Activated T-helper 2 cell treated with anti-CD3 and anti-CD28 coated beads, Interferon-gamma antibody, Interleukin-2, Interleukin-4, amounts not matched to agents 10 μg/mL and 5 μg/mL and 100 μg/mL, durations not matched to agents 14 hours and 24 hours and 36 hours (primary cell): ENCODE measurements at regions of chr7 and their contacts with region 1.

Region 1: DNA sequence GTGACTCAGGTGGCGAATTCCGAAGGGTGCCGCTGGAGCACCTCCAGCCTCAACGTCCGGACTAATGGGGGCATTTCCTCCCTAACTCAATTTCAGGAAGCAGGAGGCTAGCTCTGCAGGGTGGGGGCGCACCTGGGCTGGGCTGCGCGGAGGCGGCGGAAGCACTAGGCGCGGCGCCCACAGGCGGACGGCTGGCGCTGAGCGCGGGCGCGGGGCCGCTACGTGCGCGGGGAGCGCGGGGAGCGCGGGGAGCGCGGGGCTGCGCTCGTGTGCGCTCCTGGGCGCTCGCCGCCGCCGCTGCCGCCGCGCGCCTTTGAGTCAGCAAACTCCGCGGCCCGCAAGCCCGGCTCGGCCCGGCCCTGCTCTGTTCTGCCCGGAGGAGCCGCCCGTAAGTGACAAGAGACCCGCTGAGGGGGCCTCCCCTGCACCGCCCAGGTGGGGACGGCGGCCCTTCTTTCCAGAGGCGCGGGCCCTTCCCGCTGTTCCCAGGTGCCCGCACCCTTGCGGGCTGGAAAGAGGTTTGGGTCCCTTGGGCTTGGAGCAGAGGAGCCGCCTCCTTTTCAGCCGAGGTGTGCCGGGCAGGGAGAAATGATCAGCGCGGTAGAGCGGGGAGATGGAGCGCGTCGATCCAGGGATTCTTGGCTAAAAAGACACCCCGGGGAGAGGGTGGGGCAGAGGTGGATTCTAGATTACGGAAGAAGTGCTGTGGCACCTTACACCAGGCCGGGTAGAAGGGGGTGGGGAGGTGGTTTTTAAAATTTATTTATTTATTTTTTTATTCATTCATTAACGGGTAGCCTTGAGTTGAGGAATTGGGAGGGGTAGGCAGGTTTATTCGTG is at the start of gene SNX10:
- DNase-seq: peak; percentile 67
- H3K4me3 Mint-ChIP-seq: peak within 1 kb of the TSS; percentile 99
- H3K27ac Mint-ChIP-seq: peak within 1 kb of the TSS; percentile 95
- H3K4me1 Mint-ChIP-seq: peaks cover 37% of the 10 kb centered on the region
- H3K27me3 Mint-ChIP-seq: peaks cover 4% of the 10 kb centered on the region
- total RNA-seq, gene SNX10: 54.9 and 59.3 TPM in 2 replicates

Region 2: DNA sequence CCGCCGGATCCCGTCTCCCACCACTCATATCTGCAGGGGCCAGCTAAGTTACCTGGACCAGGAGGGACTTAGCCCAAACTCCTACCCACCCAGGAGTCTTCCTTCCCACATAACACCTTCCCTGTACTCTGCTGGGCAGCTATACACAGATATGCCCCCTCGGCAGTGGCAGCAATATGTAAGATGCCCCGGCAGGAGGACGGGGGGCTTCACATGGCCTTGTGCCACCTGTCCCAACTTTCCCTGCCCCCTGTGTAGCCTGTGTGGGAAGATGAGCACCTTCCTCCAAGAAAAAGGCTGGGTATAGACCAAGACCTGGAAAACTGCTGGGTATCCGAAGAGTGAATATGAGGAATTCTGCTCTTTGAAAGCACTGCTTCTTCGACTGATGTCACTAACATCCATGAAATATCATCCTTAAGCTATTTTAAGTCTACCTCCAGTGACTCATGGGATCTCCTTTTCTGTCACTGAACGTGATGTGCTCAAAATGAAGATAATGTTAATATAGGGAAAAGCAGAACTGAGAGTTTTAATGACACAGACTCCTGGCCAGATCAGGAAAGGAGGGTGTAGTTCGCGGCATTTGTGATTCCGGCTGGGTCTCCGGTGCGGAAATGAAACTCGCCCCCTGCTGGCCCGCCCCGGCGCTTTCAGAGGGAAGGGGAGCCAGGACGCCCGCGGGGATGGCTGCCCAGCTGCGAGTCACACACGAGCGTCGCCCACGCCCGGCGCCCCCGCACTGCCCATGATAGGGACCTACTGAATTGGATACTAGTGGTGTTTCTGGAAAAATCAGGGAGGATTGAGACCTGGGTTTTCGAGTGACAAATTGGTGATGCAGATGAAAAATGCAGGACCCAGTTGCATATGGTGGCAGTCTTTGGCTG is 396.8 kb before region 1 on chr7:
- intact Hi-C with region 1: loop called (anchors 10 kb)
- DNase-seq: peak; percentile 53
- H3K4me3 Mint-ChIP-seq: peak overlapping the region; percentile 53
- H3K27ac Mint-ChIP-seq: no peak overlapping the region
- H3K4me1 Mint-ChIP-seq: peaks cover 31% of the 10 kb centered on the region
- H3K27me3 Mint-ChIP-seq: peaks cover 7% of the 10 kb centered on the region

Region 3: GRCh38 chr7:26090927-26091519 is 200.9 kb before region 1 on chr7:
- intact Hi-C with region 1: loop called (anchors 5 kb)
- DNase-seq: no peak
- H3K4me3 Mint-ChIP-seq: peak overlapping the region; percentile 3
- H3K27ac Mint-ChIP-seq: no peak overlapping the region
- H3K4me1 Mint-ChIP-seq: peaks cover 19% of the 10 kb centered on the region
- H3K27me3 Mint-ChIP-seq: peaks cover 2% of the 10 kb centered on the region

Region 4: GRCh38 chr7:26200444-26201246 is 91.3 kb before region 1 on chr7 and contains the start of gene HNRNPA2B1:
- intact Hi-C with region 1: loop called (anchors 1 kb)
- DNase-seq: peak; percentile 97
- H3K4me3 Mint-ChIP-seq: peak within 1 kb of the TSS; percentile 100
- H3K27ac Mint-ChIP-seq: peak within 1 kb of the TSS; percentile 100
- H3K4me1 Mint-ChIP-seq: peaks cover 45% of the 10 kb centered on the region
- H3K27me3 Mint-ChIP-seq: no peaks in the 10 kb centered on the region
- total RNA-seq, gene HNRNPA2B1: 835 and 845 TPM in 2 replicates

Region 5: DNA sequence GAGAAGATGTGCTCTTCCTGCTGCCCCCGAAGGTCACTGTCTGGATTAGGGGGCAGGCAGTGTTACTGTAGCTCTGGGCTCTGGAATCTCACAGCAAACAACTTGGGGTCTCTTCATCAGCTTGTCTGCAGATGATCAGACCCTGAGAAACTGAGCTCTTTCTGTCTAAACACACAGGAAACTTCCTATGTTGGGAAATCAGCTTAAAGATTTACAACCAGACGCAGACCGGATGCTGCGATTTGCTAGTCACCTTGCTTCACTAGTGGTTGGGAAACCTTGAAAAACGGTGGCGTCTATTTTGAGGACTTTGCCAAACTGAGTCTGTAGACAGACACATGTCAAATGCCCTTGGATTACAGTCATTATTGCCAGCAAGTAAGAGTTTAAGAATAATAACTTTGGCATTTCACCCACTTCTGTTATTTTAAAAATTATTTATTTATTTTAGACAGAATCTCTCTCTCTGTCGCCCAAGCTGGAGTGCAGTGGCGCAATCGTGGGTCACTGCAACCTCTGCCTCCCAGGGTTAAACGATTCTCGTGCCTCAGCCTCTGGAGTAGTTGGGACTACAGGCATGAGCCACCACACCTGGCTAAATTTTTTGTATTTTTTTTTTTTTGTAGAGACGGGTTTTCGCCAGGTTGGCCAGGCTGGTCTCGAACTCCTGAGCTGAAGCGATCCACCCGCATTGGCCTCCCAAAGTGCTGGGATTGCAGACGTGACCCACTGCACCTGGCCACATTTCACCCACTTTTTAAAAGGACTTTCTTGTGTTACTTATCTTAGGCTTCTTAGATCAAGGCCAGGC is 13.7 kb after region 1 on chr7:
- intact Hi-C with region 1: loop called (anchors 1 kb)
- DNase-seq: no peak
- H3K4me3 Mint-ChIP-seq: no peak overlapping the region
- H3K27ac Mint-ChIP-seq: peak overlapping the region; percentile 87
- H3K4me1 Mint-ChIP-seq: peaks cover 40% of the 10 kb centered on the region
- H3K27me3 Mint-ChIP-seq: no peaks in the 10 kb centered on the region

Region 6: GRCh38 chr7:26318921-26319320 is 27.0 kb after region 1 on chr7:
- intact Hi-C with region 1: no loop called
- DNase-seq: no peak
- H3K4me3 Mint-ChIP-seq: no peak overlapping the region
- H3K27ac Mint-ChIP-seq: no peak overlapping the region
- H3K4me1 Mint-ChIP-seq: peaks cover 15% of the 10 kb centered on the region
- H3K27me3 Mint-ChIP-seq: no peaks in the 10 kb centered on the region

Region 7: GRCh38 chr7:26365077-26365900 is 73.4 kb after region 1 on chr7:
- intact Hi-C with region 1: loop called (anchors 1 kb)
- DNase-seq: peak; percentile 30
- H3K4me3 Mint-ChIP-seq: no peak overlapping the region
- H3K27ac Mint-ChIP-seq: peak overlapping the region; percentile 63
- H3K4me1 Mint-ChIP-seq: peaks cover 20% of the 10 kb centered on the region
- H3K27me3 Mint-ChIP-seq: no peaks in the 10 kb centered on the region

Region 8: GRCh38 chr7:26705567-26705966 is 413.6 kb after region 1 on chr7:
- intact Hi-C with region 1: no loop called
- DNase-seq: no peak
- H3K4me3 Mint-ChIP-seq: no peak overlapping the region
- H3K27ac Mint-ChIP-seq: no peak overlapping the region
- H3K4me1 Mint-ChIP-seq: no peaks in the 10 kb centered on the region
- H3K27me3 Mint-ChIP-seq: peaks cover 23% of the 10 kb centered on the region

Region 9: GRCh38 chr7:27662490-27663205 is 1370.7 kb after region 1 on chr7 and contains the start of gene HIBADH:
- intact Hi-C with region 1: loop called (anchors 5 kb)
- DNase-seq: peak; percentile 95
- H3K4me3 Mint-ChIP-seq: peak within 1 kb of the TSS; percentile 83
- H3K27ac Mint-ChIP-seq: peak within 1 kb of the TSS; percentile 79
- H3K4me1 Mint-ChIP-seq: peaks cover 16% of the 10 kb centered on the region
- H3K27me3 Mint-ChIP-seq: peaks cover 2% of the 10 kb centered on the region
- total RNA-seq, gene HIBADH: 23.1 and 27.9 TPM in 2 replicates